ENCODE measurements at regions of chr2 and their contacts with region 1.

Region 1: DNA sequence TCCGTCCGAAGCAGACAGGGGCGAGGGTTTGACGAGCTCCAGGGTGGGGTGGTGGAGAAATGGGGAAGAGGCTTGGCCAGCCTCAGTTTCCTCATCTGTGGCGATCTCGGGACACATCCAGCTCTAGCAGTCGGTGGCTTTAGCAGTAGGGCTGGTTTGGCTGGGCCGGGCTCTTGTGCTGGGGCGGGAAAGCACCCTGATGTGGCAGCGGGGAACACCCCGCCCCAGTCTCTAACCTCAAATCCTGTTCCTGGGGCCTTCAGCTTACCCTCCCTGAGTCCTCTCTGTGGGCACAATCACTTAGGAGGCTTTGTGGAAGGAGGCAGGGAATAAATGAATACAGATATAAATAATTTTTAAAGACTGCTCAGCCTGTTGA is 26.5 kb upstream of the MCFD2 start:
- DNase-seq: peak; percentile 74 to 89 (median 79)
- H3K4me3 ChIP-seq: peak overlapping the region; percentile 95 to 96
- H3K4me3 Mint-ChIP-seq: peak overlapping the region; percentile 97 to 100 (median 99)
- H3K27ac ChIP-seq: peak overlapping the region; percentile 100
- H3K27ac Mint-ChIP-seq: peak overlapping the region; percentile 98 to 100 (median 99)
- H3K4me1 ChIP-seq: peaks cover 55% of the 10 kb centered on the region
- H3K4me1 Mint-ChIP-seq: peaks cover 29 to 75% (median 47%) of the 10 kb centered on the region in 4 donors
- H3K27me3 ChIP-seq: no peaks in the 10 kb centered on the region
- H3K27me3 Mint-ChIP-seq: no peaks in the 10 kb centered on the region

Region 2: GRCh38 chr2:46929612-46930011 is 12.5 kb before region 1 on chr2:
- CTCF ChIA-PET with region 1: interaction called, 11 read pairs
- POLR2A ChIA-PET with region 1: no interaction called
- intact Hi-C with region 1: no loop called
- DNase-seq: no peak
- H3K4me3 ChIP-seq: no peak overlapping the region
- H3K4me3 Mint-ChIP-seq: no peak overlapping the region
- H3K27ac ChIP-seq: no peak overlapping the region
- H3K27ac Mint-ChIP-seq: no peak overlapping the region
- H3K4me1 ChIP-seq: no peaks in the 10 kb centered on the region
- H3K4me1 Mint-ChIP-seq: peaks cover 4 to 9% (median 6%) of the 10 kb centered on the region in 4 donors
- H3K27me3 ChIP-seq: no peaks in the 10 kb centered on the region
- H3K27me3 Mint-ChIP-seq: no peaks in the 10 kb centered on the region

Region 3: DNA sequence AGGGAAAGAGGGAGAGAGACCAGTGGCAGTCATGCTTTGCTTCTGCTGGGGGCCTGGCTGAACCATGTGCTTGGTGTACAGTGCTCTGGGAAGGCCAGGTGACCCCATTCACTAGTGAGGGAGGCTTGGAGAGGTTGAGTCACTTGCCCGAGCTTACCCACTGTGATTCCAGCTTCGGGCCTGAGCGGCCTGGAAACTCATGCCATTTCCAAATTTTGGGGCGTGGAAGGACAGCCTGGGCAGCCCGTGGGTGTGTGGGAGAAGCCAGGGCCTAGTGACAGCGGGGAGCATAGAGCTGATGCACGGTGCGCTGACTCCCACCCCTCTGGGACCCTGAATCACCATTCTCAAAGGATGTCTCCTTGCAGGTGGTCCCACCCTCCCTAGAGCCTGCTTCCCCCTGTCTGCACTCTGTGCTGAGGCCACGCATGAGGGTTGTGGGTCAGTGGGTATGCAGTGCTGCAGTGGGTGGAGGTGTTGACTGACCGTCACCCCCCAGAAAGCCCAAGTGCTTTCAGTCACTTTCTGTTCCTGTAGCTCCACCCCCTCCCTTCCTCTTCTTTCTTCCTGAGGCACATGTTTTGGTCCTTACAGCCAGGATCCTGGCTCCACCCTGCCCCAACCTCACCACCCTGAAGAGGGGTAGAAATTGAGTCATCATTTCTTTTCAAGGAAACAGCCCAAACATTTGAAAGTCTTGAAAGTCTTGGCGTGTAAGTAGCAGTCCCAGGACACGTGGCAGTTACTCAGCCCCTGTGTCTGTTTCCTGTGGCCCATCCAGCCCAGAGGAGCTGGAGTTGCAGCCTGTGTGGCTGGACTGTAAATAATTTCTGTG is 42.7 kb after region 1 on chr2:
- CTCF ChIA-PET with region 1: no interaction called
- POLR2A ChIA-PET with region 1: interaction called, 8 read pairs
- intact Hi-C with region 1: loop called (anchors 2 kb)
- DNase-seq: peak in 1 of 5 donors; percentile 50
- H3K4me3 ChIP-seq: no peak overlapping the region
- H3K4me3 Mint-ChIP-seq: peak overlapping the region in 7 of 8 donors; percentile 55 to 80 (median 72)
- H3K27ac ChIP-seq: peak overlapping the region; percentile 42
- H3K27ac Mint-ChIP-seq: peak overlapping the region; percentile 85 to 97 (median 94)
- H3K4me1 ChIP-seq: peaks cover 48% of the 10 kb centered on the region
- H3K4me1 Mint-ChIP-seq: peaks cover 23 to 53% (median 36%) of the 10 kb centered on the region in 4 donors
- H3K27me3 ChIP-seq: no peaks in the 10 kb centered on the region
- H3K27me3 Mint-ChIP-seq: no peaks in the 10 kb centered on the region

Region 4: DNA sequence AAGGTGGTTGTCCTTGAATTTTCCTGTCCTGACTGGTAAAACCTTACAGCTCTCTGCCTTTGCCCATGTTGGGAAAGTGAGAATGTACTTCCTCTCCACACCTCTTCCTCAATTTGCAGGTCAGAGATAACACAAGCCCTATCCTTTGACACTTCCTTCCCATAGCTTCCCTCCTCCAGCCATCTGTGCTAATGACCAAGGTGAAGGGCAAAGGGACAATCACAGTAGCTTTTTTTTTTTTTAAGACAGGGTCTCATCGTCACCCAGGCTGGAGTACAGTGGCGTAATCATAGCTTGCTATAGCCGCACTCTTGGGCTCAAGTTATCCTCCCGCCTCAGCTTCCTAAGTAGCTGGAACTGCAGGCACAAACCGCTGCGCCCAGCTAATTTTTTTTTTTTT is 237.3 kb after region 1 on chr2:
- CTCF ChIA-PET with region 1: no interaction called
- POLR2A ChIA-PET with region 1: no interaction called
- intact Hi-C with region 1: no loop called
- DNase-seq: no peak
- H3K4me3 ChIP-seq: no peak overlapping the region
- H3K4me3 Mint-ChIP-seq: no peak overlapping the region
- H3K27ac ChIP-seq: no peak overlapping the region
- H3K27ac Mint-ChIP-seq: peak overlapping the region in 2 of 7 donors; percentile 67 to 72
- H3K4me1 ChIP-seq: peaks cover 16% of the 10 kb centered on the region
- H3K4me1 Mint-ChIP-seq: peaks cover 13 to 34% (median 19%) of the 10 kb centered on the region in 4 donors
- H3K27me3 ChIP-seq: no peaks in the 10 kb centered on the region
- H3K27me3 Mint-ChIP-seq: peaks cover 6 to 9% of the 10 kb centered on the region in 2 donors

Measured in CD4-positive, alpha-beta memory T cell (primary cell).